Caco-2 (cell line): ENCODE measurements at regions of chr12 and their contacts with region 1.

Region 1: GRCh38 chr12:52032804-52033502 is 18.3 kb upstream of the NR4A1 start:
- DNase-seq: peak; percentile 98
- H3K4me3 ChIP-seq: peak overlapping the region; percentile 33
- H3K4me3 Mint-ChIP-seq: peak overlapping the region; percentile 85
- H3K27ac Mint-ChIP-seq: peak overlapping the region; percentile 92
- H3K4me1 ChIP-seq: peaks cover 20% of the 10 kb centered on the region
- H3K4me1 Mint-ChIP-seq: peaks cover 19% of the 10 kb centered on the region
- H3K27me3 ChIP-seq: no peaks in the 10 kb centered on the region
- H3K27me3 Mint-ChIP-seq: no peaks in the 10 kb centered on the region
- CTCF ChIP-seq: no peak

Region 2: DNA sequence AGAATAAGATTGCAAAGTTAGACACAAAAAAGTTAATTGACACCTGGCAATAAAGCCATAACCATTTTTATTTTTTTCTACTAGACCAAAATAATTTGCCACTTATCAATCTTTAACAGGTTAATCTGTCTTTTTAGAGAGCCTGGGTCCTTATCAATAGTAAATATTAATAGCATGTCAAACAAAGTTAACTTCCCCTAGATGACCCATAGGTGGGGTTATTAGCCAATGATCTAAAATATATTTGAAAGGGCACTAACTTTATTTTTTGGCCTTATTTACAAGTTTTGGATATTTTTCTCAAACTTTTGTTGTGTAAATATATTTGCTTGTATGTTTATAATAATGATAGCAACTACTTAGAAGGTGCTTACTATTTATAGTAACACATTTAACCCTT is 141.1 kb before region 1 on chr12:
- CTCF ChIA-PET with region 1: interaction called, 10 read pairs
- POLR2A ChIA-PET with region 1: no interaction called
- intact Hi-C with region 1: no loop called
- DNase-seq: no peak
- H3K4me3 ChIP-seq: no peak overlapping the region
- H3K4me3 Mint-ChIP-seq: no peak overlapping the region
- H3K27ac Mint-ChIP-seq: no peak overlapping the region
- H3K4me1 ChIP-seq: peaks cover 13% of the 10 kb centered on the region; the same call in 1 of the 2 replicates
- H3K4me1 Mint-ChIP-seq: peaks cover 7% of the 10 kb centered on the region
- H3K27me3 ChIP-seq: no peaks in the 10 kb centered on the region
- H3K27me3 Mint-ChIP-seq: no peaks in the 10 kb centered on the region
- CTCF ChIP-seq: peak; percentile 54 to 56

Region 3: GRCh38 chr12:51994959-51995358 is 38.0 kb before region 1 on chr12:
- CTCF ChIA-PET with region 1: interaction called, 12 read pairs
- POLR2A ChIA-PET with region 1: no interaction called
- intact Hi-C with region 1: no loop called
- DNase-seq: no peak
- H3K4me3 ChIP-seq: no peak overlapping the region
- H3K4me3 Mint-ChIP-seq: no peak overlapping the region
- H3K27ac Mint-ChIP-seq: no peak overlapping the region
- H3K4me1 ChIP-seq: no peaks in the 10 kb centered on the region
- H3K4me1 Mint-ChIP-seq: peaks cover 6% of the 10 kb centered on the region
- H3K27me3 ChIP-seq: no peaks in the 10 kb centered on the region
- H3K27me3 Mint-ChIP-seq: no peaks in the 10 kb centered on the region
- CTCF ChIP-seq: no peak

Region 4: DNA sequence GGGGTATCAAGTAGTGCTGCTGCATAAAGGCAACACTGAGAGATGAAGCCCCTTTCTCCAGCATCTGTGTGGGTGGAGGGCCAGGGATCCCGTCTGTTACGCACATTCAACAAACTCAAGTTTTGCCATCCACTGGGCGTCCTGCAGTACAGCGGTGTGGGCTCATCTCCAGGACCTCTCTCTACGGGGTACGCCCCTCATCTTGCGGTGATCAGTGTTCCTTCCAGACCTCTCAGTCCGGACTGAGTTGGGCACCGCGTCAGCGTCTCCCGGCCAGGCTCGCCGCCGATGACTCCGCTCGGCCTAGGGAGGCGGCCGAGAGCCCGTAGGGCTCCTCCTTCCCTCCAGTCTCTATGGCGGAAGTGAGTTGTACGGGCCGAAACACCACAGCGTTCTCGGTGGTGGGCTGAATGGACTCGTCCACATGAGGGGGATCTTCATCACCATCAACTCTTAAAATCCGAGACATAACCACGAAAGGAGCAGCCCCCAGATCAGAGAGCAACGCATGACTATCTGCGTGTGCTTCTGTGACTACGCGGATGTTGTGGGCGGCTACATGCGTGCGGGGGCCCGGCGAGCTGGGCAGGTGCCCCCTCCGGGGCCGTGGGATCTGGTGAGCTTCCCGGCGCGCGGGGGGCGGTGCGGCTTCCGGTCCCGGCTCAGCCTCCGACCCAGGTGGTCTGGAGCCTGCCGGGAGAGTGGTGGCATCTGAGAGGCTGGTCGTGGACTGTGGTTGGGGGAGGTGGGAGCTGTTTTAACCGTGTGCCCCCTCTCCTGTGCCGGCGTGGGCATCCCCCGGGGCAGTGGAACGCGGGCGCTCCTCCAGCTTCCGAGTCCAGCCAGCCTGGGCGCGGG is 36.6 kb after region 1 on chr12 and contains the start of gene ATG101:
- CTCF ChIA-PET with region 1: interaction called, 19 read pairs
- POLR2A ChIA-PET with region 1: interaction called, 40 read pairs
- intact Hi-C with region 1: loop called (anchors 1 kb)
- DNase-seq: peak; percentile 96
- H3K4me3 ChIP-seq: peak within 1 kb of the TSS; percentile 80
- H3K4me3 Mint-ChIP-seq: peak within 1 kb of the TSS; percentile 85
- H3K27ac Mint-ChIP-seq: peak within 1 kb of the TSS; percentile 100
- H3K4me1 ChIP-seq: peaks cover 12% of the 10 kb centered on the region
- H3K4me1 Mint-ChIP-seq: peaks cover 30% of the 10 kb centered on the region
- H3K27me3 ChIP-seq: no peaks in the 10 kb centered on the region
- H3K27me3 Mint-ChIP-seq: no peaks in the 10 kb centered on the region
- CTCF ChIP-seq: peak; percentile 47 to 97
- total RNA-seq, gene ATG101: 67.2 and 78.0 TPM in 2 replicates

Region 5: GRCh38 chr12:52082988-52083637 is 50.2 kb after region 1 on chr12:
- CTCF ChIA-PET with region 1: interaction called, 17 read pairs
- POLR2A ChIA-PET with region 1: no interaction called
- intact Hi-C with region 1: no loop called
- DNase-seq: peak; percentile 68 to 82
- H3K4me3 ChIP-seq: no peak overlapping the region
- H3K4me3 Mint-ChIP-seq: no peak overlapping the region
- H3K27ac Mint-ChIP-seq: no peak overlapping the region
- H3K4me1 ChIP-seq: no peaks in the 10 kb centered on the region
- H3K4me1 Mint-ChIP-seq: peaks cover 7% of the 10 kb centered on the region
- H3K27me3 ChIP-seq: no peaks in the 10 kb centered on the region
- H3K27me3 Mint-ChIP-seq: no peaks in the 10 kb centered on the region
- CTCF ChIP-seq: peak; percentile 98